ENCODE measurements at regions of chr14 and their contacts with region 1.

Region 1: GRCh38 chr14:53306267-53306721 is 153.2 kb upstream of the DDHD1 start:
- DNase-seq: peak; percentile 67
- H3K4me3 ChIP-seq: peak overlapping the region; percentile 74
- H3K27ac ChIP-seq: no peak overlapping the region
- H3K4me1 ChIP-seq: peaks cover 9% of the 10 kb centered on the region
- H3K27me3 ChIP-seq: no peaks in the 10 kb centered on the region

Region 2: DNA sequence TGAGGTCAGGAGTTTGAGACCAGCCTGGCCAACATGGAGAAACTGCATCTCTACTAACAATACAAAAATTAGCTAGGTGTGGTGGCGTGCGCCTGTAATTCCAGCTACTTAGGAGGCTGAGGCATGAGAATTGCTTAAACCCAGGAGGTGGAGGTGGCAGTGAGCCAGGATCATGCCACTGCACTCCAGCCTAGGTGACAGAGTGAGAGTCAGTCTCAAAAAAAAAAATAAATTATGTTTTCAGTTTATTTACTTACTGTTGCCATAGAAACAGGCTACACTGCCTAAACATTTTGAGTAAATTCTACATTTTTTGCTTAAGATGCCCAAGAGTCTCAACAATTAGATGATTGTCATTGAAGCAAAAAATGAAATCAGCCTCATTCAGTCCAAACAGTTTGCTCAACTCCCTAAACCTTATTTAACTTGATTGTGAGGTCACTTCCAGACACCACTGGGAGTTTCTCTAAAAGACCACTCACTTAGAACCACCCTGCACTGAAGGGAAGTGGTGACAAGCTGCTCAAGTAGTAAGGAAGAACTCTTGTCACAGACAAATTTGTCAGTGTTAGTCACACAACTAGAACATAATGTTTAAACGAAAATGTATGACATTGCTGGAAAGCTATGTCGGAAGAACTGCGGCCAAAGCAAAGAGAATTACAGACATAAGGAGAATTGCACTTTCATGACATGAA is 505.1 kb before region 1 on chr14:
- in situ Hi-C with region 1: loop called (anchors 25 kb)
- DNase-seq: peak; percentile 95
- H3K4me3 ChIP-seq: peak overlapping the region; percentile 31
- H3K27ac ChIP-seq: peak overlapping the region; percentile 90
- H3K4me1 ChIP-seq: peaks cover 28% of the 10 kb centered on the region
- H3K27me3 ChIP-seq: no peaks in the 10 kb centered on the region

Region 3: GRCh38 chr14:53982546-53982945 is 676.3 kb after region 1 on chr14:
- in situ Hi-C with region 1: no loop called
- DNase-seq: no peak
- H3K4me3 ChIP-seq: no peak overlapping the region
- H3K27ac ChIP-seq: no peak overlapping the region
- H3K4me1 ChIP-seq: no peaks in the 10 kb centered on the region
- H3K27me3 ChIP-seq: peaks cover 4% of the 10 kb centered on the region